OCI-LY7 (cell line): ENCODE measurements at regions of chr12 and their contacts with region 1.

Region 1: GRCh38 chr12:109385339-109386067 is 37.8 kb downstream of the MYO1H start:
- DNase-seq: peak; percentile 61
- H3K4me3 ChIP-seq: no peak overlapping the region
- H3K27ac ChIP-seq: no peak overlapping the region
- H3K4me1 ChIP-seq: peaks cover 3% of the 10 kb centered on the region
- CTCF ChIP-seq: peak; percentile 83

Region 2: DNA sequence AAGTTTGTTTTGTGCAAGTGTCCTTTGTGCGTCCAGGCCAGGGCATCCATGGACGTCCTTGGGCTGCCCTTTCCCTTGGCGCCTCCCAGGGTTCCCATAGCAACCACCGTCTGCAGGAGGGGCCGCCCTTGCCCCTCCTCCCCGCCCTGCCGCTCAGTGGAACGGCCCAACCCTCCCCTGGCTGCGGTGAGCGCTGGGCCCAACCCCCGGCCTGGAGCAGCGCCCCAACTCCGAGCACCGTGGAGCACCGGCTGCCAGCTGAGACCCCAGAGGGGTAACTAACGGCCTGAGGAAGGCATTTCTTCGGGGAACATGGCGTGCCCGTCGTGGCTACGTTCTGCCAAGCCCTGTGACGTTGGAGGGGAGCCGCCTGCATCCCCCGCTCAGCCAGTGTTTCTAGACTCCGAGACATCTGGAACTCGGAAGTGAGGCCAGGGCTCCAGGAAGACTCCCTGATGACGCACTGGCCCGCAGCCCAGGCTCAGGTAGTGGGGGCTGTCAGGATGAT is 274.5 kb before region 1 on chr12:
- CTCF ChIA-PET with region 1: no interaction called
- POLR2A ChIA-PET with region 1: no interaction called
- intact Hi-C with region 1: loop called (anchors 5 kb)
- DNase-seq: no peak
- H3K4me3 ChIP-seq: no peak overlapping the region
- H3K27ac ChIP-seq: no peak overlapping the region
- H3K4me1 ChIP-seq: peaks cover 7% of the 10 kb centered on the region
- CTCF ChIP-seq: no peak